SK-N-SH (cell line): ENCODE measurements at regions of chr7 and their contacts with region 1.

Region 1: GRCh38 chr7:73606801-73607691 is 17.3 kb downstream of the MLXIPL start:
- DNase-seq: peak; percentile 98
- H3K4me3 ChIP-seq: peak overlapping the region; percentile 13 to 57; a peak in 2 of 4 replicates
- H3K27ac ChIP-seq: no peak overlapping the region
- H3K4me1 ChIP-seq: no peaks in the 10 kb centered on the region; a peak in 1 of 4 replicates
- H3K27me3 ChIP-seq: peaks cover 13% of the 10 kb centered on the region
- CTCF ChIP-seq: peak; percentile 100
- EP300 ChIP-seq: no peak
- RAD21 ChIP-seq: peak; percentile 91

Region 2: GRCh38 chr7:73468097-73468496 is 138.9 kb before region 1 on chr7:
- CTCF ChIA-PET with region 1: no interaction called
- POLR2A ChIA-PET with region 1: no interaction called
- DNase-seq: no peak
- H3K4me3 ChIP-seq: no peak overlapping the region
- H3K27ac ChIP-seq: no peak overlapping the region
- H3K4me1 ChIP-seq: no peaks in the 10 kb centered on the region
- H3K27me3 ChIP-seq: no peaks in the 10 kb centered on the region
- CTCF ChIP-seq: no peak
- EP300 ChIP-seq: no peak
- RAD21 ChIP-seq: no peak

Region 3: GRCh38 chr7:73565675-73566340 is 41.2 kb before region 1 on chr7:
- CTCF ChIA-PET with region 1: interaction called, 12 read pairs
- POLR2A ChIA-PET with region 1: no interaction called
- DNase-seq: no peak
- H3K4me3 ChIP-seq: peak overlapping the region; percentile 5 to 21; a peak in 3 of 4 replicates
- H3K27ac ChIP-seq: no peak overlapping the region
- H3K4me1 ChIP-seq: no peaks in the 10 kb centered on the region
- H3K27me3 ChIP-seq: no peaks in the 10 kb centered on the region
- CTCF ChIP-seq: no peak
- EP300 ChIP-seq: no peak
- RAD21 ChIP-seq: no peak

Region 4: GRCh38 chr7:73593207-73594045 is 13.6 kb before region 1 on chr7:
- CTCF ChIA-PET with region 1: interaction called, 82 read pairs
- POLR2A ChIA-PET with region 1: no interaction called
- DNase-seq: no peak
- H3K4me3 ChIP-seq: no peak overlapping the region
- H3K27ac ChIP-seq: no peak overlapping the region
- H3K4me1 ChIP-seq: no peaks in the 10 kb centered on the region
- H3K27me3 ChIP-seq: peaks cover 4% of the 10 kb centered on the region; the same call in 1 of the 2 replicates
- CTCF ChIP-seq: no peak
- EP300 ChIP-seq: no peak
- RAD21 ChIP-seq: no peak

Region 5: DNA sequence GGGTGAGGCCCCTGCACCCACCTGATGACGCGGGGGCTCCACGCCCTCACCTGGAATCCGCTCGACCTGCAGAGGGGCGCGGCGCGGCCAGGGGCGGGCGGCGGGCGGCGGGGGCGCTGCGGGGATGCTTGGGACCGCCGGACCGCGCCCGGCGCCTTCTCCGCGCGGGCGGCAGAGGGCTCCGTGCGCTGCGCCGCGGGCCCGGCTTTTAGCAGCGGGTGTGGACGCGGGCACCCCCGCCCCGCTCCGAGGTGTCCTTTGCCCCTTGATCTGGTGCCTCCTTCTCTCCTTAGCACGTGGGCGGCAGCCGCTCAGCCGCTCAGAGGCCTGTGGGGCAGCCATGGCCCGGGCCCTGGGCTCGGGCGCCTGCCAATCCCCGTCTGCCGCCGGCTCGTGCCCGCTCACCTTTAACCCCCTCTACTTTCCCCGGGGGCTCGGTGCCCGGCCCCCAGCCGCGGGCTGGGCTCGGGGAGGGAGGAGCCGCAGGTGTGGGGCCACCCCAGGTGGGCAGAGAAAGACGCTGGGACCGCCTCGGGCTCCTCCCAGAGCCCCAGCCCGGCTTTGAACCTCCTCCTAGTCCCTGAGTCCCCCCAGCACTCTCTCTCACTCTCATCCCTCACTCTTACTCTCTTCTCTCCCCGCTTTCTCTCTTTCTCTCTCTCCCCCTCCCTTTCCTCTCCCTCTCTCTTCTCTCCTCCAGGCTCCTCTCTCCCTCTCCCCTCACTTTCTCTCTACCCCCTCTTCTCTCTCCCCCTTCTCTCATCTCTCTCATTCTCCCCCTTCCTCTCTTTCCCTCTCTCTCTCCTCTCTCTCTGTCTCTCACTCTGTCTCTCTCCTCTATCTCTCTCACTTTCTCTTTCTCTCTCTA is 40.9 kb after region 1 on chr7:
- CTCF ChIA-PET with region 1: interaction called, 55 read pairs
- POLR2A ChIA-PET with region 1: no interaction called
- DNase-seq: peak; percentile 87
- H3K4me3 ChIP-seq: peak overlapping the region; percentile 40 to 41
- H3K27ac ChIP-seq: no peak overlapping the region
- H3K4me1 ChIP-seq: peaks cover 0 to 2% of the 10 kb centered on the region in 2 experiments; a peak in 1 of 4 replicates
- H3K27me3 ChIP-seq: peaks cover 93% of the 10 kb centered on the region
- CTCF ChIP-seq: peak; percentile 25
- EP300 ChIP-seq: no peak
- RAD21 ChIP-seq: peak; percentile 15; the same call in 1 of the 2 replicates

Region 6: GRCh38 chr7:73678862-73679261 is 71.8 kb after region 1 on chr7:
- CTCF ChIA-PET with region 1: interaction called, 26 read pairs
- POLR2A ChIA-PET with region 1: no interaction called
- DNase-seq: no peak
- H3K4me3 ChIP-seq: no peak overlapping the region
- H3K27ac ChIP-seq: no peak overlapping the region
- H3K4me1 ChIP-seq: peaks cover 16 to 19% of the 10 kb centered on the region in 2 experiments; a peak in 3 of 4 replicates
- H3K27me3 ChIP-seq: no peaks in the 10 kb centered on the region
- CTCF ChIP-seq: no peak
- EP300 ChIP-seq: no peak
- RAD21 ChIP-seq: no peak

Region 7: GRCh38 chr7:73701357-73701995 is 94.4 kb after region 1 on chr7:
- CTCF ChIA-PET with region 1: interaction called, 70 read pairs
- POLR2A ChIA-PET with region 1: no interaction called
- DNase-seq: peak; percentile 92
- H3K4me3 ChIP-seq: no peak overlapping the region
- H3K27ac ChIP-seq: no peak overlapping the region; a peak in 1 of 4 replicates
- H3K4me1 ChIP-seq: peaks cover 0 to 25% of the 10 kb centered on the region in 2 experiments; a peak in 3 of 4 replicates
- H3K27me3 ChIP-seq: no peaks in the 10 kb centered on the region
- CTCF ChIP-seq: peak; percentile 83
- EP300 ChIP-seq: no peak
- RAD21 ChIP-seq: peak; percentile 53

Region 8: GRCh38 chr7:73738612-73739374 is 131.7 kb after region 1 on chr7 and contains the start of gene ABHD11:
- CTCF ChIA-PET with region 1: interaction called, 272 read pairs
- POLR2A ChIA-PET with region 1: interaction called, 4 read pairs
- DNase-seq: peak; percentile 100
- H3K4me3 ChIP-seq: peak within 1 kb of the TSS; percentile 76 to 93
- H3K27ac ChIP-seq: peak within 1 kb of the TSS; percentile 82 to 87
- H3K4me1 ChIP-seq: peaks cover 7 to 13% of the 10 kb centered on the region in 2 experiments; a peak in 2 of 4 replicates
- H3K27me3 ChIP-seq: no peaks in the 10 kb centered on the region
- CTCF ChIP-seq: no peak; the same call in 1 of the 2 replicates
- EP300 ChIP-seq: no peak; a peak in 1 of 4 replicates
- RAD21 ChIP-seq: no peak
- polyA plus RNA-seq, gene ABHD11: 29.9 and 33.7 TPM in 2 replicates

Region 9: DNA sequence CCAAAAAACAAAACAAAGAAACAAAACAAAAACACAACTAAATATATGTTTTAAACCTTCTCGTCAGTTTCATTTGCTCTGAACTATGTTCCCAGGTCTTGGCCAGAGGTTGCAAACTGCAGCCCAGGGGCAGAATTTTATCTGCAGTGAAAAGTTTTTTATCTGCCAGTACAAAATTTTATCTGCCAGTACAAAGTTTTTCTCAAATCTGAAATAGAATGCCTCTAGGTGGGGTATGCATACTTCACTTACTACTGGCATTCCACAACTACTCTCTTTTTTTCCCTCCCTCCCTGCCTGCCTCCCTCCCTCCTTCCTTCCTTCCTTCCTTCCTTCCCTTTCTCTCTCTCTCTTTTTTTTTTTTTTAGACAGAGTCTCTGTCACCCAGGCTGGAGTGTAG is 172.5 kb after region 1 on chr7:
- CTCF ChIA-PET with region 1: no interaction called
- POLR2A ChIA-PET with region 1: no interaction called
- DNase-seq: no peak
- H3K4me3 ChIP-seq: no peak overlapping the region
- H3K27ac ChIP-seq: no peak overlapping the region
- H3K4me1 ChIP-seq: no peaks in the 10 kb centered on the region
- H3K27me3 ChIP-seq: no peaks in the 10 kb centered on the region
- CTCF ChIP-seq: no peak
- EP300 ChIP-seq: no peak
- RAD21 ChIP-seq: no peak